Natural killer cell (primary cell): ENCODE measurements at regions of chr4 and their contacts with region 1.

Region 1: GRCh38 chr4:183471946-183472708 is 27.7 kb downstream of the CDKN2AIP start:
- DNase-seq: peak; percentile 67 to 87
- ATAC-seq: peak; percentile 69 to 85 (median 73)
- H3K4me3 ChIP-seq: no peak overlapping the region
- H3K4me3 Mint-ChIP-seq: no peak overlapping the region
- H3K27ac ChIP-seq: no peak overlapping the region
- H3K27ac Mint-ChIP-seq: no peak overlapping the region
- H3K4me1 ChIP-seq: no peaks in the 10 kb centered on the region
- H3K4me1 Mint-ChIP-seq: peaks cover 0 to 7% of the 10 kb centered on the region in 2 donors
- H3K27me3 ChIP-seq: no peaks in the 10 kb centered on the region
- H3K27me3 Mint-ChIP-seq: no peaks in the 10 kb centered on the region
- CTCF ChIP-seq: peak; percentile 92

Region 2: DNA sequence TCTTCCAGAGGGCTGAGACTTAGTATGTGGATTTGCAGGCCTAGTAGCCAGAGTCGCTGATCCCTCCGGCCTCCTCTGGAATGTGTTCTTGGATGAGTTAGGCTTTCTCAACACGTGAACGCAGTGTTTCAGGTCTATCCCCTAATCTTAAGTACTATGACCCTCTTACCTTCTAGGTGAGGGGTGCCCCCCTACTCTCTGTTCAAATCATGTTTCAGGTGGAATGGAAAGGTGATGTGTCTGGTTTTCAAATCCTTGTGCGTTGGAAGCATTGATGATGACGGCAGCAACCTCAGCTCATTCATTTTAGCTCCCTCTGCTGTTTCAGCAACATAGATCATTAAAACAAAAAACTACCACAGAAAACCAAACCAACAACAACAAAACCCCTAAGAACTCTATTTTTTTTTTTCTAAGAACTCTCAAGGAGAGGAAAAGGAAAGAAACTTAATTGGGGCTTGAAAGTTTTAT is 130.5 kb after region 1 on chr4:
- intact Hi-C with region 1: loop called (anchors 1 kb)
- DNase-seq: peak in 1 of 2 donors; percentile 39
- ATAC-seq: no peak
- H3K4me3 ChIP-seq: no peak overlapping the region
- H3K4me3 Mint-ChIP-seq: no peak overlapping the region
- H3K27ac ChIP-seq: no peak overlapping the region
- H3K27ac Mint-ChIP-seq: no peak overlapping the region
- H3K4me1 ChIP-seq: no peaks in the 10 kb centered on the region
- H3K4me1 Mint-ChIP-seq: no peaks in the 10 kb centered on the region
- H3K27me3 ChIP-seq: no peaks in the 10 kb centered on the region
- H3K27me3 Mint-ChIP-seq: peaks cover 0 to 4% of the 10 kb centered on the region in 2 donors
- CTCF ChIP-seq: peak; percentile 8

Region 3: GRCh38 chr4:183721207-183722081 is 249.3 kb after region 1 on chr4:
- intact Hi-C with region 1: loop called (anchors 1 kb)
- DNase-seq: peak; percentile 33 to 72
- ATAC-seq: peak; percentile 49 to 72 (median 65)
- H3K4me3 ChIP-seq: no peak overlapping the region
- H3K4me3 Mint-ChIP-seq: peak overlapping the region; percentile 81
- H3K27ac ChIP-seq: no peak overlapping the region
- H3K27ac Mint-ChIP-seq: peak overlapping the region; percentile 73 to 76
- H3K4me1 ChIP-seq: peaks cover 23% of the 10 kb centered on the region
- H3K4me1 Mint-ChIP-seq: peaks cover 15 to 16% of the 10 kb centered on the region in 2 donors
- H3K27me3 ChIP-seq: no peaks in the 10 kb centered on the region
- H3K27me3 Mint-ChIP-seq: peaks cover 0 to 6% of the 10 kb centered on the region in 2 donors
- CTCF ChIP-seq: peak; percentile 26

Region 4: GRCh38 chr4:183919141-183919540 is 447.0 kb after region 1 on chr4:
- intact Hi-C with region 1: no loop called
- DNase-seq: no peak
- ATAC-seq: no peak
- H3K4me3 ChIP-seq: no peak overlapping the region
- H3K4me3 Mint-ChIP-seq: no peak overlapping the region
- H3K27ac ChIP-seq: no peak overlapping the region
- H3K27ac Mint-ChIP-seq: no peak overlapping the region
- H3K4me1 ChIP-seq: no peaks in the 10 kb centered on the region
- H3K4me1 Mint-ChIP-seq: no peaks in the 10 kb centered on the region
- H3K27me3 ChIP-seq: no peaks in the 10 kb centered on the region
- H3K27me3 Mint-ChIP-seq: peaks cover 2 to 6% of the 10 kb centered on the region in 2 donors
- CTCF ChIP-seq: no peak

Region 5: GRCh38 chr4:184168406-184169019 is 696.4 kb after region 1 on chr4:
- intact Hi-C with region 1: loop called (anchors 1 kb)
- DNase-seq: peak; percentile 48 to 67
- ATAC-seq: peak; percentile 80 to 98 (median 87)
- H3K4me3 ChIP-seq: no peak overlapping the region
- H3K4me3 Mint-ChIP-seq: no peak overlapping the region
- H3K27ac ChIP-seq: no peak overlapping the region
- H3K27ac Mint-ChIP-seq: no peak overlapping the region
- H3K4me1 ChIP-seq: peaks cover 7% of the 10 kb centered on the region
- H3K4me1 Mint-ChIP-seq: peaks cover 0 to 11% of the 10 kb centered on the region in 2 donors
- H3K27me3 ChIP-seq: no peaks in the 10 kb centered on the region
- H3K27me3 Mint-ChIP-seq: peaks cover 46 to 65% of the 10 kb centered on the region in 2 donors
- CTCF ChIP-seq: peak; percentile 78